ENCODE measurements at regions of chr7 and their contacts with region 1.

Region 1: GRCh38 chr7:75630549-75630948 is 108.2 kb downstream of the HIP1 start:
- DNase-seq: no peak
- H3K4me3 ChIP-seq: no peak overlapping the region
- H3K27ac ChIP-seq: no peak overlapping the region
- H3K4me1 ChIP-seq: no peaks in the 10 kb centered on the region
- H3K27me3 ChIP-seq: no peaks in the 10 kb centered on the region
- CTCF ChIP-seq: no peak

Region 2: DNA sequence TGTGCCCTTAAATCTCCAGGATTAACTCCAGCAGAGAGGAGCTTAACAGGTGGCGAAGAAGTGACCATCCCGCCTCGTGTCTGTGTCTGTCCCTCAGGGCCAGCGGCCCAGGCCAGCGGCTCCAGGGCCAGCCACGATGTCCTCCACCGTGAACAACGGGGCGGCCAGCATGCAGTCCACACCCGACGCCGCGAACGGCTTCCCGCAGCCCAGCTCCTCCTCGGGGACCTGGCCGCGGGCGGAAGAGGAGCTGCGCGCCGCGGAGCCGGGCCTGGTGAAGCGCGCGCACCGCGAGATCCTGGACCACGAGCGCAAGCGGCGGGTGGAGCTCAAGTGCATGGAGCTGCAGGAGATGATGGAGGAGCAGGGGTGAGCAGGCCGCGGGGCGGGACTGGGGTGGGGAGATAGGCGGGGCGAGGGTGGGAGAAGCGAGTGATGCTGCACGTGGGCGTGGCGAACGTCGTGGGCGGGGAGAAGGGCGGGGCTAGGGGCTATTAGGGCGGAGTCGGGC is 604.4 kb after region 1 on chr7:
- CTCF ChIA-PET with region 1: no interaction called
- POLR2A ChIA-PET with region 1: interaction called, 10 read pairs
- intact Hi-C with region 1: no loop called
- DNase-seq: peak; percentile 90
- H3K4me3 ChIP-seq: peak overlapping the region; percentile 37
- H3K27ac ChIP-seq: no peak overlapping the region
- H3K4me1 ChIP-seq: no peaks in the 10 kb centered on the region
- H3K27me3 ChIP-seq: peaks cover 4% of the 10 kb centered on the region
- CTCF ChIP-seq: no peak